Heart right ventricle (tissue), 16 donors: ENCODE measurements at regions of chr6 and their contacts with region 1.

Region 1: GRCh38 chr6:150891888-150892485 is 26.5 kb downstream of the MTHFD1L start:
- DNase-seq: peak; percentile 47 to 79
- ATAC-seq: peak; percentile 62 to 79 (median 75)
- H3K4me3 ChIP-seq: no peak overlapping the region
- H3K27ac ChIP-seq: no peak overlapping the region
- H3K4me1 ChIP-seq: peaks cover 0 to 22% (median 11%) of the 10 kb centered on the region in 9 donors
- H3K27me3 ChIP-seq: no peaks in the 10 kb centered on the region
- CTCF ChIP-seq: peak; percentile 74 to 93 (median 86)

Region 2: DNA sequence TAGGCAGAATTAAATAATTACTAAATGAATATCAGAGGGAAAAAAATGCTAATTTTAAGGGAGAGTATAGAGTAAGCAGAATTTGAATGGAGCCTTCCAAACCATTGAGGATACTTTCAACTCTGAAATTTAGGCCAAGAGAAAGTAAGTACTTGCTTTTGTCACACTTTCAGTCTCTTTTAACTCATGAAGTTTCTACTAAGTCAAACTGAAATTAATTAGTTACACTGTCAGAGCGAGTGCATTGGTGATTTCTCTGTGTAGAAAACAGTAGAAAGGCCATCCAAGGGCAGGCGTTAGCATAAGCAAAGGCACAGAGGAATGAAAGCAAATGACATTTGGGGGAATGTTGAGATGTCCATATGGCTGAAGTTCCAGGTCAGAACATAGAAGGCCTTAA is 199.4 kb before region 1 on chr6:
- intact Hi-C with region 1: no loop called
- DNase-seq: no peak
- ATAC-seq: no peak
- H3K4me3 ChIP-seq: no peak overlapping the region
- H3K27ac ChIP-seq: peak overlapping the region in 1 of 10 donors; percentile 3
- H3K4me1 ChIP-seq: peaks cover 0 to 92% (median 40%) of the 10 kb centered on the region in 9 donors
- H3K27me3 ChIP-seq: no peaks in the 10 kb centered on the region
- CTCF ChIP-seq: no peak

Region 3: GRCh38 chr6:151014404-151015100 is 122.6 kb after region 1 on chr6:
- intact Hi-C with region 1: loop called (anchors 2 to 10 kb)
- DNase-seq: peak; percentile 61 to 68
- ATAC-seq: peak; percentile 59 to 84 (median 79)
- H3K4me3 ChIP-seq: peak overlapping the region in 4 of 10 donors; percentile 13 to 20 (median 18)
- H3K27ac ChIP-seq: no peak overlapping the region
- H3K4me1 ChIP-seq: peaks cover 0 to 7% (median 0%) of the 10 kb centered on the region in 9 donors
- H3K27me3 ChIP-seq: no peaks in the 10 kb centered on the region
- CTCF ChIP-seq: peak; percentile 96 to 100 (median 98)

Region 4: DNA sequence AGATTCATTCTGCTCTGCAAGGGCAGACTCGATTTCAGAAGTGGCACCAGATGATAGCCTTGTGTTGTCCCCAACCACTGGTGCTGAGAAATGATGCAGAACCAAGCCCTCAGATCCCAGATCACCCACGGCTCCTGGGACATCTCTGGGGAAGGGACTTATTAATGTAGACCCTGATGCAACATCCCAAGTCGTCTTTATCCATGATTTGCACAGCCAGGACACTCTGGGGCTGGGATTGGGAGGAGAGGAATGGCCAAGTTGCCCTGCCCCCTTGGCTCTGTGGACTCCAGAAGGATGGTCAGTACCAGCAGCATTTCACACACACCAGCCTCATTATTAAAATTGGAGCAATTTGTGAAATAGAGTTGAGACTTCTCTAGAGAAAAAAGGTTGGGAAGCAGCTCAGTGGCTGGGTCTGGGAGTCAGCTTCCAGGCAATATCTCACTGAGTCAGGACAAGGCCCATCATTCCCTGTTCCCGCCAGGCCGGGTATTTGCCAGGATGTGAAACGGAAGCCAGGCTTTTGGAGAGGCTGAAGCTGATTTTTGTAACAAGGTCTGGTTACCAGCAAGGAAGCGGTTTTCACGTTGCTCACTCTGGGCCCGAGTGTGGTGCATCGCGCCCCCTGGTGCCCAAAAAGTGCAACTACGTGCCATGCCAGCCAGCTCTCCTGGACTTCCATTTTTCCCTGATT is 432.0 kb after region 1 on chr6:
- intact Hi-C with region 1: loop called in 4 of 10 experiments (anchors 2 kb)
- DNase-seq: peak; percentile 81 to 83
- ATAC-seq: peak; percentile 87 to 95 (median 90)
- H3K4me3 ChIP-seq: peak overlapping the region in 3 of 10 donors; percentile 5 to 58 (median 12)
- H3K27ac ChIP-seq: peak overlapping the region in 8 of 10 donors; percentile 33 to 76 (median 56)
- H3K4me1 ChIP-seq: peaks cover 0 to 30% (median 27%) of the 10 kb centered on the region in 9 donors
- H3K27me3 ChIP-seq: peaks cover 0 to 24% (median 6%) of the 10 kb centered on the region in 7 donors
- CTCF ChIP-seq: peak; percentile 97 to 99 (median 98)

Region 5: GRCh38 chr6:151335930-151336329 is 443.9 kb after region 1 on chr6:
- intact Hi-C with region 1: loop called in 9 of 10 experiments (anchors 1 to 5 kb)
- DNase-seq: no peak
- ATAC-seq: no peak
- H3K4me3 ChIP-seq: no peak overlapping the region
- H3K27ac ChIP-seq: no peak overlapping the region
- H3K4me1 ChIP-seq: peaks cover 0 to 4% (median 0%) of the 10 kb centered on the region in 9 donors
- H3K27me3 ChIP-seq: no peaks in the 10 kb centered on the region
- CTCF ChIP-seq: no peak